ENCODE measurements at regions of chr17 and their contacts with region 1.

Region 1: GRCh38 chr17:64538508-64539130 is 31.8 kb downstream of the CEP95 start:
- DNase-seq: no peak
- H3K4me3 ChIP-seq: no peak overlapping the region
- H3K4me3 Mint-ChIP-seq: no peak overlapping the region
- H3K27ac Mint-ChIP-seq: peak overlapping the region; percentile 11
- H3K4me1 ChIP-seq: no peaks in the 10 kb centered on the region
- H3K4me1 Mint-ChIP-seq: peaks cover 5% of the 10 kb centered on the region
- H3K27me3 ChIP-seq: no peaks in the 10 kb centered on the region
- H3K27me3 Mint-ChIP-seq: no peaks in the 10 kb centered on the region
- CTCF ChIP-seq: no peak

Region 2: DNA sequence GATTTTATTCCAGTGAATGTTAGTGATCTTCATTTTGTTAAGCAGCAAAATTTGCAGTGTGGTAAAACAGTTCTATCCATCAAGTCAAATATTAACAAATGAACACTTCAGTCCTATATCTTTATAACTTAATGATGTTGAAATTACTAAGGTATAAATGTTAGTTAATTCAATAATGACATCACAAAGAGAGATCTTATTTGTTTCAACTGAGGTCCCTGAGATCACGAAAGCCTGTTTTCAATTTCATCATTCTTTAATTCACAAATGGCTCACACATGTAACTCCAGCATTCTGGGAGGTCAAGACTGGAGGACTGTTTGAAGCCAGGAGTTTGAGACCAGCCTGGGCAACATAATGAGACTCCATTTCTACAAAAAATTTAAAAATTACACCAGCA is 109.6 kb after region 1 on chr17:
- CTCF ChIA-PET with region 1: interaction called, 4 read pairs
- POLR2A ChIA-PET with region 1: no interaction called
- intact Hi-C with region 1: loop called (anchors 5 kb)
- DNase-seq: no peak
- H3K4me3 ChIP-seq: no peak overlapping the region
- H3K4me3 Mint-ChIP-seq: no peak overlapping the region
- H3K27ac Mint-ChIP-seq: no peak overlapping the region
- H3K4me1 ChIP-seq: no peaks in the 10 kb centered on the region
- H3K4me1 Mint-ChIP-seq: no peaks in the 10 kb centered on the region
- H3K27me3 ChIP-seq: no peaks in the 10 kb centered on the region
- H3K27me3 Mint-ChIP-seq: no peaks in the 10 kb centered on the region
- CTCF ChIP-seq: no peak